ENCODE measurements at regions of chr2 and their contacts with region 1.

Region 1: DNA sequence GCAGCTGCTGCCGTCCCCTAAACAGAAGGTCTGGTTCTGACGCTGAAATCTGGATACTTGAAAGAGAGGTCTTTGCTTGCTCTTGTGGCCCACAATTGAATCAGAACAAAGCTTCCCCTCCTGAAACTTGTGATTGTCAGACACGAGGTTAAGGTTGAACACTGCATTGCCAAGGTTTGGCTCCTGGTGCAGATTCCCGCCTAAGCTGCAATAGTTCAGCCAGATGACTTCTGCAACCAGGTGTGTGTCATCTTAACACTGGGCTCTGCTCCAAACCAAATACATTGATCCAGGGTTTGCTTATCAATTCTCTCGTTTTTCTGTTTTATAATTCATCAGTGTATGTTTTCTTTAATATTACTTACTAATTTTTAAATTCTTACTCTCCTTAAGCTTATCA is 14.6 kb downstream of the GKN1 start:
- DNase-seq: no peak
- ATAC-seq: no peak
- H3K4me3 ChIP-seq: no peak overlapping the region
- H3K27ac ChIP-seq: peak overlapping the region in 1 of 2 experiments; percentile 35; a peak in 1 of 6 replicates
- H3K4me1 ChIP-seq: no peaks in the 10 kb centered on the region
- CTCF ChIP-seq: no peak
- EP300 ChIP-seq: no peak
- POLR2A ChIP-seq: no peak
- RAD21 ChIP-seq: no peak

Region 2: DNA sequence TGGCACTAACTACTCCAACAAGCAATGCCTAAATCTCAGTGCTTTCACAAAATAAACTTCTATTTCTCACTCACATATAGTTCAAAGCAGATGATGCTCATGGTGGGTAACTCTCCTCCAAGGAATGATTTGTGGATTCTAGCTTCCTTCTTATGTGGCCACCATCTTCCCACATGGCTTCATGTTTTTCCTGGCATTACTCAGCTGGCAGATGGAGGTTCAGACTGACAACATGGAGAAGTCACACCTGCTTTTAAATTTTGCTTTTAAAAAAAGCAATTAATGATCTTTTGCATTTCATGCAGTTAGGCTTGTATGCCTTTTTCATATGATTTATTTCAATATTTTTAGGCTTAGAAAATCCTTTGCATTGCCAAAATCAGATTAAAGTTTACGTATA is 30.0 kb before region 1 on chr2:
- CTCF ChIA-PET with region 1: interaction called, 10 read pairs
- POLR2A ChIA-PET with region 1: no interaction called
- DNase-seq: no peak
- ATAC-seq: no peak
- H3K4me3 ChIP-seq: no peak overlapping the region
- H3K27ac ChIP-seq: no peak overlapping the region
- H3K4me1 ChIP-seq: no peaks in the 10 kb centered on the region
- CTCF ChIP-seq: no peak
- EP300 ChIP-seq: no peak
- POLR2A ChIP-seq: no peak
- RAD21 ChIP-seq: no peak

Region 3: GRCh38 chr2:69003731-69004130 is 14.7 kb after region 1 on chr2:
- CTCF ChIA-PET with region 1: interaction called, 10 read pairs
- POLR2A ChIA-PET with region 1: no interaction called
- DNase-seq: no peak
- ATAC-seq: no peak
- H3K4me3 ChIP-seq: no peak overlapping the region
- H3K27ac ChIP-seq: no peak overlapping the region
- H3K4me1 ChIP-seq: no peaks in the 10 kb centered on the region
- CTCF ChIP-seq: no peak
- EP300 ChIP-seq: no peak
- POLR2A ChIP-seq: no peak
- RAD21 ChIP-seq: no peak

Region 4: DNA sequence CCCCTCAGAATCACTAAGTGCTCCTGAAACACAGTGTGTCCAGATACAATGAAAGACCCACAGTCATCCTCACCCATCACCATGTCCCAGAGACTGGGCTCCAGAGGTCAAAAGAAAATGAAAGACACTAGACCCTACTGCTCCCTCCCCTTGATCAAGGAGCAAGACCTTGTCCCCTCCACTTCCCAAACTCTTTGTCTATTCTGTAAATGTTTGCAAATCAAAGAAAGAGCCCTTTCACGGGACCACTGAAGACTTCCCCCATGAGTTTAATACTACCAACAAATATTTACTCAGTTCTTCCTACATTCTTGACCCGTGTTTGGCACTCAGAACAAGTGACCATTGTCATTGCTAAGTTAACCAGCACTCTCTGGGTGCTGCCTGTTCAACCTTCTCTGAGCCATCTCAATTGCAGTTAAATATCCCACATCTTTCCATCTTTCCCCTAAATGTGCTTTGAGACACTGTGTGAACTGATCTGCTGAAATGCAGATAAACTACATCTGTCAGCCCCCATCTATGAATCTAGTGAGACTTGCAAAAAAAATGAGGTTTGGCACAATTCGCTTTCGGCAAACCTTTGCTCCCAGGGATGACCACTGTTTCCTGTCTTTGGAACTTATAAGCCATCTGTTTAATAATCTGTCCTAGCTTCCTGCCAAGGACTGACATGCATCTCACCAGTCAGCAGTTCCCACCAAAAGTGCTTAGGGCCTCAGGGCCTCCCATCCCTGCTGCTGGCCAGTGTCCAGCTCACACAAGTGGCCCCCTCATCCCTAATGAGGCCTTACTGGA is 227.7 kb after region 1 on chr2:
- CTCF ChIA-PET with region 1: no interaction called
- POLR2A ChIA-PET with region 1: no interaction called
- DNase-seq: no peak
- ATAC-seq: no peak
- H3K4me3 ChIP-seq: no peak overlapping the region
- H3K27ac ChIP-seq: no peak overlapping the region
- H3K4me1 ChIP-seq: peaks cover 27% of the 10 kb centered on the region
- CTCF ChIP-seq: no peak
- EP300 ChIP-seq: no peak
- POLR2A ChIP-seq: no peak
- RAD21 ChIP-seq: no peak